Dorsolateral prefrontal cortex (tissue), 120 donors: ENCODE measurements at regions of chr1 and their contacts with region 1.

Region 1: GRCh38 chr1:200146100-200146499 is 118.6 kb downstream of the NR5A2 start:
- DNase-seq: no peak
- H3K4me3 ChIP-seq: no peak overlapping the region
- H3K27ac ChIP-seq: no peak overlapping the region
- H3K27me3 ChIP-seq: no peaks in the 10 kb centered on the region
- CTCF ChIP-seq: no peak

Region 2: DNA sequence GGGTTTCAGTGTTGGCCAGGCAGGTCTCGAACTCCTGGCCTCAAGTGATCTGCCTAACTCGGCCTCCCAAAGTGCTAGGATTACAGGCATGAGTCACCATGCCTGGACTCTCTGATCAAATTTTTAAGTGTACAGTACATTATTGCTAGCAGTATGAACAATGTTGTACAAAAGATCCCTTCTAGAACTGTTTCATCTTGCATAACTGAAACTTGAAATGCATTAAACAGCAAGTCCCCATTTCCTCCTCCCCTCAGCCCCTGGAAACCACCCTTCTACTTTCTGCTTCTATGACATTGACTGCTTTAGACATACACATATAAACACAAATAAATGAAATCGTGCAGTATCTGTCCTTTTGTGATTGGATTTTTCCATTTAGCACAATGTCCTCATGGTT is 1043.9 kb before region 1 on chr1:
- intact Hi-C with region 1: no loop called
- DNase-seq: no peak
- H3K4me3 ChIP-seq: no peak overlapping the region
- H3K27ac ChIP-seq: no peak overlapping the region
- H3K27me3 ChIP-seq: no peaks in the 10 kb centered on the region
- CTCF ChIP-seq: no peak

Region 3: GRCh38 chr1:200038981-200039848 is 106.9 kb before region 1 on chr1:
- intact Hi-C with region 1: no loop called
- DNase-seq: no peak
- H3K4me3 ChIP-seq: peak overlapping the region; percentile 10 to 67 (median 44)
- H3K27ac ChIP-seq: no peak overlapping the region
- H3K27me3 ChIP-seq: peaks cover 23 to 100% (median 100%) of the 10 kb centered on the region in 45 donors
- CTCF ChIP-seq: no peak

Region 4: DNA sequence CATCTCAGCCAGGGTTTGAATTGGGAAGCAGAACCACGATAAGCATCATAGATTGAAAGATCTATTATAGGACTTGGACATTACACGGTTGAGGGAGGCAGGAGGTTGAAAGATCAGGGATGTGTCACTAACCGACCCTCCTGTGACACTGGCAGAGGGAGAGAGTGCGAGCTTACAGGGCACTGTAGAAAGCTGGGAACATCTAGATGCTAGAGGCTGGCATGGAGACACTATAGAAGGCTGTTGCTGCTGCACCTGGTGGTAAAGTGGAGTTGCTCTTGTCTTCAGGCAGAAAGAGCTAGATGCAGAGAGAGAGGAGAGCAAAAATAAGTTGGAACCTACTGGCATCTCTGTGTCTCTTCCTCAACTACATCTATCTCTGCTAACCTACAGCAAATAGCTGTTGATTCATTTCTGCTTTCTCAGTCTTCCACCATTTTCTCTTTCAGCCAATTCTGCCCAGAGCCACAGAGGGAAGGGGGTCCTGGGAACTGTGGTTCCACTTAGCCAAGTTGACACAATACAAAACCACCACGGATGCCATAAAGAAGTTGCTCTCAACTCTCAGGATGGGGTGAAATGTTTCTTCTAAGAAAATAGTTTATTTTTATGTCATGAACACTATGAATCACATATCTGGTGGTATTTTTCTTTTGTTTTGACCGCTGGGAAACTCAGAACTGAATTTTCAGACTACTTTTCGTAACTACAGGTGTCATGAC is 107.8 kb after region 1 on chr1:
- intact Hi-C with region 1: loop called in 1 of 2 experiments (anchors 5 kb)
- DNase-seq: no peak
- H3K4me3 ChIP-seq: no peak overlapping the region
- H3K27ac ChIP-seq: no peak overlapping the region
- H3K27me3 ChIP-seq: no peaks in the 10 kb centered on the region
- CTCF ChIP-seq: no peak